ENCODE measurements at regions of chr10 and their contacts with region 1.

Region 1: GRCh38 chr10:13659897-13660550 is 73.3 kb downstream of the PRPF18 start:
- DNase-seq: peak; percentile 83
- ATAC-seq: peak; percentile 78

Region 2: DNA sequence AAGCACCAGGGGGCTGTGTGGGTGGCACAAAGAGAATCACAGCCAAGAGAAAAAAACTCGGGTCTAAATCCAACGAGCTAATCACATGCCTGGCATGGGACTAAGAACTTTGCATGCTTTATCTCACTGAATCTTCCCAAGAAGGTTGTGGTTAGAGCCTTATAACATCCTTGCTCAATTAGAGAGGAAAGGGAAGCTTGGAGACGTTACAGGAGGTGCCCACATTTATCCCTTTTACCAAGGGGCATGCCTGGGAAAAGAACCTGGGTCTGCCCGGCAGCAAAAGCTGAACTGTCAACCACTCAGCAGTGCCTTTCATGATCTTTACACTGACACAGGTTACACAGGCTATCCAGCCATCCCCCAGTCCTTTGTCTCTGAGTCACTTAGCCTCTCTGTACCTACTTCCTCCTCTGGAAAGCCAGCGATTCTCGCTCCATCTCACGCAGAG is 116.9 kb after region 1 on chr10:
- intact Hi-C with region 1: loop called (anchors 2 kb)
- DNase-seq: no peak
- ATAC-seq: no peak

Measured in left ventricle myocardium superior (tissue), 1 donor.